Esophagus muscularis mucosa (tissue), 4 donors: ENCODE measurements at regions of chr11 and their contacts with region 1.

Region 1: GRCh38 chr11:134223836-134224709 is at the starts of genes NCAPD3 and VPS26B:
- DNase-seq: peak; percentile 100
- H3K4me3 ChIP-seq: peak within 1 kb of the TSS; percentile 75 to 89 (median 88)
- H3K27ac ChIP-seq: peak within 1 kb of the TSS; percentile 84 to 95 (median 89)
- H3K4me1 ChIP-seq: peaks cover 36 to 53% (median 41%) of the 10 kb centered on the region in 4 donors
- H3K27me3 ChIP-seq: no peaks in the 10 kb centered on the region
- CTCF ChIP-seq: no peak
- EP300 ChIP-seq: peak; percentile 9
- POLR2A ChIP-seq: peak; percentile 97
- total RNA-seq, gene NCAPD3: 6.2 to 9.6 (median 8.8) TPM
- total RNA-seq, gene VPS26B: 30.2 to 50.2 (median 41.7) TPM

Region 2: DNA sequence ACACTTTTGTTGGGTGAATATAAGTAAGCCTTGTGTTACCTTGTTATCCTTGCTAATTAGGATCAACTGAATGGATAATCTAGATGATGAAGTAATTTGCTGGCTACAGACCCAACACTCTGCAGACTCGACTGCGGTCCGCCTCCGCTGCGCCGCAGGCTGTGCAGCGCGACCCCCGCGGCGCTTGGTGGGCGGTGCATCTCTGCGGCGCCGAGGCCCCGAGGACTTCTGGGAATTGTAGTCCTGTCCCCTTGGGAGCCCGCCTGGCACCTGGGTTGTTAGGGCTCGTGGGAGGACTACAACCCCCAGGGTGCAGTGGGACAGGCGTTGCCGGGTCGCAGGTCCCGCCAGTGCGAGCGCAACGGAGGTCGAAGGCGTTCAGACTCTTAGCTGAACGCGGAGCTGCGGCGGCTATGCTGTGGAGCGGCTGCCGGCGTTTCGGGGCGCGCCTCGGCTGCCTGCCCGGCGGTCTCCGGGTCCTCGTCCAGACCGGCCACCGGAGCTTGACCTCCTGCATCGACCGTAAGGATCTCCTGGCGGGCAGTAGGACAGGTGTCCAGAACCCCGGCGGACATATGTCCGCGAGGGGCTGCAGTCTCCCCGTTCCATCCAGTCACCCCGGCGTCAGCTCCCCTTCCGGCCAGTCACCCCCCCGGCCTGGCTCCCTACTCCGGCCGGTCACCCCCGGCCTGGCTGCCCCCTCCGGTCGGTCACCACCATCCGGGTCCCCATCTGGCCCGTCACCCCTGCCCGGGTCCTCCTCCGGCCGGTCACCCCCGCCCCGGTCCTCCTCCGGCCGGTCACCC is 29.3 kb after region 1 on chr11 and contains the starts of genes ACAD8 and THYN1:
- intact Hi-C with region 1: loop called (anchors 2 kb)
- DNase-seq: peak; percentile 97
- H3K4me3 ChIP-seq: peak within 1 kb of the TSS; percentile 75 to 96 (median 78)
- H3K27ac ChIP-seq: peak within 1 kb of the TSS; percentile 76 to 81 (median 78)
- H3K4me1 ChIP-seq: peaks cover 15 to 42% (median 31%) of the 10 kb centered on the region in 4 donors
- H3K27me3 ChIP-seq: no peaks in the 10 kb centered on the region
- CTCF ChIP-seq: peak; percentile 19 to 58 (median 43)
- EP300 ChIP-seq: no peak
- POLR2A ChIP-seq: peak; percentile 37
- total RNA-seq, gene ACAD8: 18.3 to 25.0 (median 21.1) TPM
- total RNA-seq, gene THYN1: 34.1 to 59.6 (median 50.2) TPM